ENCODE measurements at regions of chr9 and their contacts with region 1.

Region 1: DNA sequence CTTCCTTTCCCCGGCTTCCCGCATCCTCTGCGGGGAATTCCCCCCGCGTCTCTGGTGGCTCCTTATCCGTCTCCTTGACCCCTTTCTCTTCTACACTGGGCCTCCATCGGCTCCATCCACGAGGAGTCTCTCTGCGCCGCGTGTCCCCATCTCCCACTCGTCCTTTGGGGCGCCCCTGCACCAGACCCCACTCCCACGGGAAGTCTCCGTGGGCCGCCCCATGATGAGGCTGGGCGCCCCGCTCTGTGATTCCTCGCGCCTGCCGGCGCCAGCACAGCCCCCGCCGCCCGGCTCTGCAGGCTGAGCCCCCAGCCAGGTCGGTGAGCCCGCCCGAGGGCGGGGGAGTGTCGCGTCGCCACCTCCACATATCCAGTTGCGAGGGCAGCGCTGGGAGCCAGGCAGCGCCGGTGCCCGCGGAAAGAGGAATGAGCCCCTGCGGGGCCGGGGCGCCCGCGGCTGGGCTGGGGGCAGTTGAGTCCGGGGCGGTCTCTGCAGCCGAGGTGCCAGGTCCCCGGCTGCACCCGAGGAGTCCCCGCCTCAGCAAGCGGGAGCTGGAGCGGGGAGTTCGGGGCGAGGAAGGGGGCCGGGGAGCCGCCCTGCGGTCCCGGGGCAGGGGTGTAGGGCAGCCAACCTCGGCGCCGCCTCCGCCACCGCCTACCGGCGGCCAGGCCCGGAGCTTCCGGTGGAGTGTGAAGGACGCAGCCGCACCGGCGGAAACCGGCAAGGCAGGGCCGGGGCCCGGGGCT is 2.1 kb upstream of the TRAF1 start:
- DNase-seq: no peak
- ATAC-seq: peak; percentile 34
- H3K4me3 ChIP-seq: peak overlapping the region; percentile 88
- H3K27ac ChIP-seq: peak overlapping the region; percentile 99
- H3K4me1 ChIP-seq: peaks cover 48% of the 10 kb centered on the region
- H3K27me3 ChIP-seq: no peaks in the 10 kb centered on the region
- CTCF ChIP-seq: no peak
- EP300 ChIP-seq: no peak
- POLR2A ChIP-seq: peak; percentile 81
- RAD21 ChIP-seq: no peak

Region 2: DNA sequence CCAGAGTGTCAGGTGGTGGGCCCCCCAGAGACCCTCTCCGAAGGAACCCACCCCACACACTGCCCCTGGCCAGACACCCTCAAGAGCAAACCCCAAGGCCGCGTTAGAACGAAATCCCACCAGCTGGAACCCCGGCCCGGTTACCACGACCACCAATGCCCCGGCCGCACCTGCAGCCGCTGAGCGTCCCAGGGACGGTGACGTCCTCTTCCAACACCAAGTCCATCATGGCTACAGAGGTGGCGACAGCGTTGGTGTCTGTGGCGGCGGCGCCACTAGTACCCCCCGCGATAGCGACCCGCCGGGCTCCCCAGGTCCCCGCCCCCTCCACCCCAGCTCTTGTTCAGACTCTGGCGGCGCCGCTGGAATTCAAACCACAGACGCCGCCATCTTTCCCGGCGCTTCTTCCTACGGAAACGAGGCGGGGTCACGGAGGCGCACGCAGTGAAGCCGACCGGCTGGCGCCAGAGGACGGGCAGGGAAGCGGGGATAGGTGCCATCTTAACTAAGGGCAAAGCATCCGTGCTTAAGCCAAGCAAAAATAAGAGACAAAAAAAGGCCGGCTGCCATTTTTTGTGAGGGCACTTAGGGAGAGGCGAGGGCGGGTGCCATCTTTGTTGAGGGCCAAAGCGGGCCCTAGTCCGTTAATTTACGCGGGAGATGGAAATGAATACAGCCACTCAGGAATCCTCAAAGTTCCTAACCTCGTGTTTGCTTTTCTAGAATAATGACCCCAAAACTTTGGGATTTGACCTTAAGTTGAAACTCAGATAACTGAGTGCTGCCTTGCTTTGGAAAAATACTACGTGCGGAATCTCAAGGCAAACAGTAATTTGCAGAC is 348.7 kb before region 1 on chr9 and contains the start of gene CDK5RAP2:
- CTCF ChIA-PET with region 1: no interaction called
- POLR2A ChIA-PET with region 1: no interaction called
- RAD21 ChIA-PET with region 1: no interaction called
- SMC1A ChIA-PET with region 1: no interaction called
- in situ Hi-C with region 1: no loop called
- intact Hi-C with region 1: loop called (anchors 10 kb)
- DNase-seq: peak; percentile 88
- ATAC-seq: peak; percentile 94
- H3K4me3 ChIP-seq: peak within 1 kb of the TSS; percentile 89
- H3K27ac ChIP-seq: peak within 1 kb of the TSS; percentile 85
- H3K4me1 ChIP-seq: peaks cover 20% of the 10 kb centered on the region
- H3K27me3 ChIP-seq: no peaks in the 10 kb centered on the region
- CTCF ChIP-seq: no peak
- EP300 ChIP-seq: 0 out of 4 replicates have a peak, but pooled peaks of 1 of the 2 experiments have one; percentile 31
- POLR2A ChIP-seq: peak; percentile 71
- RAD21 ChIP-seq: no peak
- polyA plus RNA-seq, gene CDK5RAP2: 16.2 to 16.8 TPM

Region 3: DNA sequence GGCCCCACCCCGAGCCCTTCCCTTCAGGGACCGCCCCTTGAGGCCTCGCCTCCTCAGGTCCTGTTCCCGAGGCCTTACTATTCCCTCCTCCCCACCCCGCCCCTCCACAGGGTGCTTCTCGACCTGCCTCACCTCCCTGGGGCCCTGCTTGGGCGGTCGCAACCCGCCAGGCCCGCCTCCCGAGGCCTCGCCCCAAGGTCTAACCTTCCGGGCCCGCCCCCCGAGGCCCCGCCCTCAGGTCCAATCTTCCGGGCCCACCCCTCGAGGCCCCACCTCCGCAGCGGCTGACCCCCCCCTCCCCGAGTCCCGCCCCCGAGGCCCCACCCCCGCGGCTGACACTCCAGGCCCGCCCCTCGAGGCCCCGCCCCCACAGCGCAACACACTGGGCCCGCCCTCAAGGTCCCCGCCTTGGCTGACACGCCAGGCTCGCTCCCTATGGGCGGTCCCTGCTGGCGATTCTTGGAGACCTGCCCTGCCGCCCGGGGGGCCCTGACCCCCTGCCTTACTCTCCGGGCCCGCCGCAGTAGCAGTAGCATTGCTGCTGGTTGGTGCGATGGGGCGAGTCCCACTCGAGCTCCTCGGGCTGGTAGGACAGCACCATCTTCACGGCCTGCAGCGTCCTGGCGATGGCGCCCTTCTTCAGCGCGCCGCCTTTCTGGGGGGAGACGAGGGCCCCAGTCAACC is 59.8 kb before region 1 on chr9:
- CTCF ChIA-PET with region 1: interaction called, 30 read pairs
- POLR2A ChIA-PET with region 1: interaction called, 11 read pairs
- RAD21 ChIA-PET with region 1: interaction called, 34 read pairs
- SMC1A ChIA-PET with region 1: interaction called, 57 read pairs
- in situ Hi-C with region 1: no loop called
- intact Hi-C with region 1: no loop called
- DNase-seq: peak; percentile 77
- ATAC-seq: peak; percentile 96
- H3K4me3 ChIP-seq: peak overlapping the region; percentile 73
- H3K27ac ChIP-seq: peak overlapping the region; percentile 61
- H3K4me1 ChIP-seq: peaks cover 11% of the 10 kb centered on the region
- H3K27me3 ChIP-seq: no peaks in the 10 kb centered on the region
- CTCF ChIP-seq: peak; percentile 50 to 65 (median 64)
- EP300 ChIP-seq: no peak
- POLR2A ChIP-seq: peak; percentile 80
- RAD21 ChIP-seq: peak; percentile 43

Region 4: DNA sequence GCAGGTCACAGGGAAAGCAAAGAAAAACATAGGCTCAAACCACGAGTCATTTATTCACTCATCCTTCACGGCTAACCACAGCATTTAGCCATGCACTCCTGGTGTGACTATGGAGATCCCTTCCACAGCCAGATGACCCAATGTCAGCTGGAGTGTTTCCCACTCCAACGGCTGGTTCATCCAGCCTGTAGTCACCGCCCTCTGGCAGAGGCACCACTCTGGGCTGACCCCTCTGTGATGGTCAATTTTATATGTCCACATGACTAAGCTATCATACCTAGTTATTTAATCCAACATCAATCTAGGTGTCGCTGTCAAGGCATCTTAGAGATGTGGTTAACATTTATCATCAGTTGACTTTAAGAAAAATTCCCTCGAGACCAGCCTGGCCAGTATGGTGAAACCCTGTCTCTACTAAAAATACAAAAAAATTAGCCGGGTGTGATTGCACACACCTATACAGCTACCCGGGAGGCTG is 42.1 kb before region 1 on chr9:
- CTCF ChIA-PET with region 1: interaction called, 13 read pairs
- POLR2A ChIA-PET with region 1: interaction called, 383 read pairs
- RAD21 ChIA-PET with region 1: interaction called, 104 read pairs
- SMC1A ChIA-PET with region 1: interaction called, 522 read pairs
- in situ Hi-C with region 1: no loop called
- intact Hi-C with region 1: no loop called
- DNase-seq: no peak
- ATAC-seq: peak; percentile 49
- H3K4me3 ChIP-seq: no peak overlapping the region
- H3K27ac ChIP-seq: no peak overlapping the region
- H3K4me1 ChIP-seq: peaks cover 26% of the 10 kb centered on the region
- H3K27me3 ChIP-seq: no peaks in the 10 kb centered on the region
- CTCF ChIP-seq: no peak; a peak in 1 of 6 replicates
- EP300 ChIP-seq: no peak
- POLR2A ChIP-seq: no peak
- RAD21 ChIP-seq: no peak

Region 5: GRCh38 chr9:120909904-120910303 is 18.8 kb before region 1 on chr9:
- CTCF ChIA-PET with region 1: interaction called, 19 read pairs
- POLR2A ChIA-PET with region 1: interaction called, 11 read pairs
- RAD21 ChIA-PET with region 1: interaction called, 8 read pairs
- SMC1A ChIA-PET with region 1: interaction called, 522 read pairs
- in situ Hi-C with region 1: no loop called
- intact Hi-C with region 1: no loop called
- DNase-seq: no peak
- ATAC-seq: peak; percentile 5; the same call in 2 of the 3 replicates
- H3K4me3 ChIP-seq: no peak overlapping the region
- H3K27ac ChIP-seq: no peak overlapping the region; the same call in 1 of the 2 replicates
- H3K4me1 ChIP-seq: peaks cover 7% of the 10 kb centered on the region
- H3K27me3 ChIP-seq: no peaks in the 10 kb centered on the region
- CTCF ChIP-seq: no peak
- EP300 ChIP-seq: no peak
- POLR2A ChIP-seq: 0 out of 2 replicates have a peak, but pooled peaks have one; percentile 31
- RAD21 ChIP-seq: no peak

Region 6: GRCh38 chr9:120944434-120944843 is 15.8 kb after region 1 on chr9:
- CTCF ChIA-PET with region 1: interaction called, 110 read pairs
- POLR2A ChIA-PET with region 1: interaction called, 224 read pairs
- RAD21 ChIA-PET with region 1: interaction called, 196 read pairs
- SMC1A ChIA-PET with region 1: interaction called, 108 read pairs
- in situ Hi-C with region 1: no loop called
- intact Hi-C with region 1: no loop called
- DNase-seq: peak; percentile 96
- ATAC-seq: peak; percentile 100
- H3K4me3 ChIP-seq: no peak overlapping the region
- H3K27ac ChIP-seq: peak overlapping the region; percentile 54
- H3K4me1 ChIP-seq: peaks cover 17% of the 10 kb centered on the region
- H3K27me3 ChIP-seq: no peaks in the 10 kb centered on the region
- CTCF ChIP-seq: no peak
- EP300 ChIP-seq: peak; percentile 48 to 57; a peak in 2 of 4 replicates
- POLR2A ChIP-seq: no peak
- RAD21 ChIP-seq: no peak

Region 7: GRCh38 chr9:120998111-120998510 is 69.5 kb after region 1 on chr9:
- CTCF ChIA-PET with region 1: no interaction called
- POLR2A ChIA-PET with region 1: no interaction called
- RAD21 ChIA-PET with region 1: no interaction called
- SMC1A ChIA-PET with region 1: no interaction called
- in situ Hi-C with region 1: no loop called
- intact Hi-C with region 1: no loop called
- DNase-seq: no peak
- ATAC-seq: no peak
- H3K4me3 ChIP-seq: no peak overlapping the region
- H3K27ac ChIP-seq: no peak overlapping the region
- H3K4me1 ChIP-seq: peaks cover 4% of the 10 kb centered on the region; the same call in 1 of the 2 replicates
- H3K27me3 ChIP-seq: no peaks in the 10 kb centered on the region
- CTCF ChIP-seq: no peak
- EP300 ChIP-seq: no peak
- POLR2A ChIP-seq: no peak
- RAD21 ChIP-seq: no peak

Region 8: GRCh38 chr9:121196389-121196788 is 267.7 kb after region 1 on chr9:
- CTCF ChIA-PET with region 1: no interaction called
- POLR2A ChIA-PET with region 1: interaction called, 3 read pairs
- RAD21 ChIA-PET with region 1: no interaction called
- SMC1A ChIA-PET with region 1: no interaction called
- in situ Hi-C with region 1: no loop called
- intact Hi-C with region 1: loop called (anchors 5 kb)
- DNase-seq: no peak
- ATAC-seq: peak; percentile 62
- H3K4me3 ChIP-seq: 0 out of 2 replicates have a peak overlapping the region, but pooled peaks have one; percentile 38
- H3K27ac ChIP-seq: peak overlapping the region; percentile 47
- H3K4me1 ChIP-seq: peaks cover 8% of the 10 kb centered on the region
- H3K27me3 ChIP-seq: no peaks in the 10 kb centered on the region
- CTCF ChIP-seq: no peak
- EP300 ChIP-seq: no peak
- POLR2A ChIP-seq: no peak
- RAD21 ChIP-seq: no peak

Measured in GM12878 (cell line).